PC-3 (cell line): ENCODE measurements at regions of chr10 and their contacts with region 1.

Region 1: GRCh38 chr10:61750929-61751471 is 88.3 kb downstream of the CABCOCO1 start:
- DNase-seq: peak; percentile 98
- ATAC-seq: peak; percentile 83
- H3K4me3 ChIP-seq: no peak overlapping the region
- H3K27ac ChIP-seq: peak overlapping the region; percentile 48
- H3K4me1 ChIP-seq: peaks cover 26% of the 10 kb centered on the region
- H3K27me3 ChIP-seq: no peaks in the 10 kb centered on the region
- CTCF ChIP-seq: peak; percentile 100

Region 2: DNA sequence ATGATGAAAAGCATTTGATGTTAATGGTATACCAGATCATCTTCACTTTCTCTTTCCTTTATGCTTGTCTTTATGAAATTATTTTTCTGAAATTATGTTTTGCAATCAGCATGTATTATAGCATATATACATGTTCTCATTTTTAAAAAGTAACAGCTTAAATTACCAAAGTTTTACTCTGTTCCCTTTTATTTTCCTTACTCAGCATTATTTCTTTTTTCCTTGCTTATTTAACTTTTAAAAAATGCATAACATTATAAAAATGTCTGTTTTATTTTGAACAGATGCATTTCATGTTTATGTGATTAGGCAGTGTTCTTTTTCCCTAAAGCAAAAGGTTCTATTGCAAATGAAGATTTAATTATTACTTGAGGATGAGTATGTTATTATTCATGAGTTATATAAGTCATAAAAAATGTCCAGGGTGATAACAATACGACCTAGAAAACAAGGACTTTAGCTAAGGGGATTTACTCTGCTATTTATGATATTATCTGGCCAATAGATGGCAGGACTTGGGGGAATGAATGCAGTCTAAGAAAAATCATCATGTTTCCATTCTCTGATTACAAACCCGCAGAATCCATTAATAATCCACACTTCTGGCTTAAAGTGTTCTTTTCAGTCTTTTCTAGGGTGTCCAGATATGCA is 49.8 kb before region 1 on chr10:
- CTCF ChIA-PET with region 1: interaction called, 14 read pairs
- POLR2A ChIA-PET with region 1: no interaction called
- intact Hi-C with region 1: no loop called
- DNase-seq: peak; percentile 41
- ATAC-seq: peak; percentile 61
- H3K4me3 ChIP-seq: no peak overlapping the region
- H3K27ac ChIP-seq: no peak overlapping the region
- H3K4me1 ChIP-seq: no peaks in the 10 kb centered on the region
- H3K27me3 ChIP-seq: no peaks in the 10 kb centered on the region
- CTCF ChIP-seq: peak; percentile 59

Region 3: GRCh38 chr10:61760943-61761824 is 10.2 kb after region 1 on chr10:
- CTCF ChIA-PET with region 1: interaction called, 11 read pairs
- POLR2A ChIA-PET with region 1: interaction called, 5 read pairs
- intact Hi-C with region 1: no loop called
- DNase-seq: peak; percentile 99
- ATAC-seq: peak; percentile 66
- H3K4me3 ChIP-seq: peak overlapping the region; percentile 4; the same call in 1 of the 2 replicates
- H3K27ac ChIP-seq: peak overlapping the region; percentile 77
- H3K4me1 ChIP-seq: peaks cover 53% of the 10 kb centered on the region
- H3K27me3 ChIP-seq: no peaks in the 10 kb centered on the region
- CTCF ChIP-seq: no peak

Region 4: GRCh38 chr10:61819208-61819607 is 68.2 kb after region 1 on chr10:
- CTCF ChIA-PET with region 1: interaction called, 48 read pairs
- POLR2A ChIA-PET with region 1: interaction called, 4 read pairs
- intact Hi-C with region 1: loop called (anchors 1 kb)
- DNase-seq: peak; percentile 59
- ATAC-seq: peak; percentile 70
- H3K4me3 ChIP-seq: no peak overlapping the region
- H3K27ac ChIP-seq: no peak overlapping the region
- H3K4me1 ChIP-seq: no peaks in the 10 kb centered on the region
- H3K27me3 ChIP-seq: no peaks in the 10 kb centered on the region
- CTCF ChIP-seq: peak; percentile 74

Region 5: GRCh38 chr10:62076891-62077290 is 325.9 kb after region 1 on chr10:
- CTCF ChIA-PET with region 1: interaction called, 10 read pairs
- POLR2A ChIA-PET with region 1: no interaction called
- intact Hi-C with region 1: no loop called
- DNase-seq: peak; percentile 100
- ATAC-seq: peak; percentile 99
- H3K4me3 ChIP-seq: peak overlapping the region; percentile 31
- H3K27ac ChIP-seq: peak overlapping the region; percentile 61
- H3K4me1 ChIP-seq: peaks cover 45% of the 10 kb centered on the region
- H3K27me3 ChIP-seq: no peaks in the 10 kb centered on the region
- CTCF ChIP-seq: peak; percentile 95

Region 6: GRCh38 chr10:62390497-62391176 is 639.6 kb after region 1 on chr10:
- CTCF ChIA-PET with region 1: interaction called, 12 read pairs
- POLR2A ChIA-PET with region 1: no interaction called
- intact Hi-C with region 1: loop called (anchors 10 kb)
- DNase-seq: peak; percentile 51
- ATAC-seq: peak; percentile 51
- H3K4me3 ChIP-seq: no peak overlapping the region
- H3K27ac ChIP-seq: no peak overlapping the region
- H3K4me1 ChIP-seq: peaks cover 26% of the 10 kb centered on the region
- H3K27me3 ChIP-seq: no peaks in the 10 kb centered on the region
- CTCF ChIP-seq: no peak